ENCODE measurements at regions of chr12 and their contacts with region 1.

Region 1: DNA sequence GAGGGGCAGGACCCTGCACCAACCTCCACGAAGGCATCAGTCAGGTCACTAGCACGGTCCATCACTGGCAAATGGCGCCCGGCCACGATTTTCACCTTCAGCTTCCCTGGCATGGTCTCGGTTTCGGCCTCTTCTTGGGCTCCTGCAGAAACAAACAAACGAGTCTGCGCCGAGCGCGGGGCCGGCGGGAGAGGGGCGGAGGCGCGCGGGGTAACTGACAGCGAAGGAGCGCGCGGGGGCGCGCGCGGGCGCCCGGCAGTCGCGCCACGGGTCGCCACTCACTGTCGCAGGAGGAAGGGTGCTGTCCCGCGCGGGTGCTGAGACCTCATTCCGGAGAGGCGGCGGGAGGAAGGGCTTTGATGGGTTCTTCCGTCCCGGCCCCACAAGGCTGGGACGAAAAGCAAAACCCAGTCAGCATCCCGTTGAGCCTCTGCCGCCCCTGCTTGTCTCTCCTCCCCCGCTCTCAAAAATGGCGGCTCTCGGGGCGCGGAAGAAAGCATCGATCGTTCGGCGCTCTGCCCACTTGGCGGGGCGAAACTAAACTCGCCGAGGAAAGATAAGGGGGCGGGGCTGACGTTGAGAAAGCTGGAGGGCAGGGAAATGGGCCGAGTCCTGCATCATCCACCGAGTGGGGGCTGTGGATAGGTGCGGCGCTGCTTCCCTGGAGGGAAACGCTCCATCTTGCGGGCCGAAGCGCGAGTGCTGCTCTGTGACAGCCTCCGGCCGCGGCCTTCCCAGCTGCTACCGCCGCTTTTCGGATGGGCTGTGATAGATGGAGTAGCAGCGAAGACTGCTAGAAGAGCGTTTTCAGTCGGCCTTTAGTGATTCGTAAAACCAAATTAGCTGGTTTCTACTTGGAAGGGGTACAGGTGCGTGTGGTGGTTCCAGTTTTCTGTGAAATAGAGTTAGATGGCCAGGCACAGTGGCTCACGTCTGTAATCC is at the start of gene C2CD5:
- DNase-seq: peak; percentile 96 to 99
- ATAC-seq: peak; percentile 95 to 98 (median 98)
- H3K4me3 ChIP-seq: peak within 1 kb of the TSS; percentile 68 to 97 (median 88)
- H3K27ac ChIP-seq: peak within 1 kb of the TSS; percentile 89 to 99 (median 96)
- H3K4me1 ChIP-seq: peaks cover 0 to 52% (median 22%) of the 10 kb centered on the region in 9 donors
- H3K27me3 ChIP-seq: no peaks in the 10 kb centered on the region
- CTCF ChIP-seq: peak in 8 of 9 donors; percentile 14 to 51 (median 38)
- total RNA-seq, gene C2CD5: 14.3 to 30.2 (median 20.2) TPM

Region 2: GRCh38 chr12:22624870-22625761 is 80.8 kb after region 1 on chr12 and contains the start of gene ETNK1:
- intact Hi-C with region 1: loop called (anchors 2 to 10 kb)
- DNase-seq: peak; percentile 93 to 96
- ATAC-seq: peak; percentile 100
- H3K4me3 ChIP-seq: peak within 1 kb of the TSS; percentile 50 to 95 (median 80)
- H3K27ac ChIP-seq: peak within 1 kb of the TSS; percentile 85 to 99 (median 96)
- H3K4me1 ChIP-seq: peaks cover 0 to 48% (median 30%) of the 10 kb centered on the region in 9 donors
- H3K27me3 ChIP-seq: no peaks in the 10 kb centered on the region
- CTCF ChIP-seq: no peak
- total RNA-seq, gene ETNK1: 15.2 to 26.6 (median 17.0) TPM

Measured in heart right ventricle (tissue), 16 donors.